AG04449 (cell line): ENCODE measurements at regions of chr2 and their contacts with region 1.

Region 1: DNA sequence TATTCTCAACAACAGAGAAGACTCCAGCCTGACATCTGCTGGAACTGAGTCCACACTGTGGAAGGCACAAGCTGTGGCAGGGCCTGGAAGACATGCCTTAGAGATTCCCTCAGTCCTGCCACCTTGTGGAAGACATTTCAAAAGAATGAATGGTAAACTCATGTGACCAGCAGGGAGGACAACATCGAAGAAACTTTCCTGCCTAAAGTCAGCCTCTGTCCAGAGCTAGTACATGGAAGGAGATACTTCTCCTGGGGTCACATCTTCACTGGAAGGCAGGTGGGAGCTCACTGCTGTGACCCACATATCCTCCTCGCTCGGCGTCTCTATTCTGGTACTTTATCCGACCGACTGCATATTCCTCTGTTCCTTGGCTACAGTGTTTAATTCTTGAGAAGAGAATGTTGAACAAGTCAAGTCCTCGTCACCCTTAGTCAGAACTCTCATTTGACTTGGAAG is 59.5 kb downstream of the PUM2 start:
- DNase-seq: peak; percentile 23
- H3K4me3 ChIP-seq: no peak overlapping the region
- CTCF ChIP-seq: peak; percentile 76

Region 2: GRCh38 chr2:20106746-20107145 is 184.4 kb before region 1 on chr2:
- CTCF ChIA-PET with region 1: interaction called, 20 read pairs
- POLR2A ChIA-PET with region 1: no interaction called
- DNase-seq: no peak
- H3K4me3 ChIP-seq: peak overlapping the region; percentile 25; the same call in 1 of the 2 replicates
- CTCF ChIP-seq: peak; percentile 47

Region 3: GRCh38 chr2:20185176-20186022 is 105.7 kb before region 1 on chr2:
- CTCF ChIA-PET with region 1: no interaction called
- POLR2A ChIA-PET with region 1: no interaction called
- DNase-seq: no peak
- H3K4me3 ChIP-seq: no peak overlapping the region
- CTCF ChIP-seq: no peak

Region 4: GRCh38 chr2:20247084-20247483 is 44.1 kb before region 1 on chr2:
- CTCF ChIA-PET with region 1: interaction called, 13 read pairs
- POLR2A ChIA-PET with region 1: no interaction called
- DNase-seq: no peak
- H3K4me3 ChIP-seq: no peak overlapping the region
- CTCF ChIP-seq: no peak

Region 5: DNA sequence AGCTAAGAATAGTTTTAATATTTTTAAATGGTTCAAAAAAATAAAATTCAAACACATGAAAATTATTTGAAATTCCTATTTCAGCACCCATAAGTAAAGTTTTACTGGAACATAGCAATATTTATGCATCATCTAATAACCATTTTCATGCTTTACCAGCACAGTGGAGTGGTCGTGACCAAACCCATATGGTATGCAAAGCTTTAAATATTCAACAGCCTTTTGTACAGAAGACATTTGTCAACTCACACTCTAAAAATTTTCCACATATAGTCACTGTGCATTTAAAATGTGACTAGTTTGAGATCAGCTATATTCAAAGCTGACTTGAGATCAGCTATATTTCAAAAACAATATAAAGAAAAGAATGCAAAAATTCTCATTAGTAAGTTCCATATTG is 13.3 kb after region 1 on chr2:
- CTCF ChIA-PET with region 1: interaction called, 176 read pairs
- POLR2A ChIA-PET with region 1: no interaction called
- DNase-seq: peak; percentile 42
- H3K4me3 ChIP-seq: no peak overlapping the region
- CTCF ChIP-seq: no peak

Region 6: DNA sequence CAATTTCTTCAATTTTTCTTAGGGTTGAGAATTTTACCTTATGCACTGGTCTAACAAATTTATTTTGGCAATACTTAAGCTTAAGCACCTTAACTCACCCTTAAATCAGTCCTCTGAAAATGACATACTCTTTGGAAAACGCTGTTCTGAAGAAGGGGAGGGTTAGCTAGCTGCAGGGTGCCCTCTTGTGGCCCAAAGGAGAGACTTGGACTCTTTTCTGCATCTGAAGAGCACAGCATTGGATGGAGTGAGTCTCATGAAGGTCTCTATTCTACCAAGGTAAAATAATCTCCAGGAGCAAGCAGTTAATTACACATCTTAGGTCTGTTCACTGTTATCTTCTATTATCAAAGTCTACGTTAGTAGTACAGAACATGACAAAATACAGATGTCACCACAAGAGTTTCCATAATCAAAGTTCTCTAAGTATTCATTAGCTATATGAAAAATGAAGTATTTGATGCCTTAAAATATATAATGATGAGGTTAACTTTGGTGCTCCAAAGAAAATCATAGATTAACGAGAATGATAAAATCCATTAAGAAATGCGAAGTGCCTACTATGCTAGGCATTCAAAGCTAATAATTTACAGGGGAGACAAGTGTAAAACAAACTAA is 35.1 kb after region 1 on chr2:
- CTCF ChIA-PET with region 1: interaction called, 49 read pairs
- POLR2A ChIA-PET with region 1: no interaction called
- DNase-seq: no peak
- H3K4me3 ChIP-seq: no peak overlapping the region
- CTCF ChIP-seq: peak; percentile 88

Region 7: GRCh38 chr2:20584637-20585321 is 293.6 kb after region 1 on chr2:
- CTCF ChIA-PET with region 1: no interaction called
- POLR2A ChIA-PET with region 1: no interaction called
- DNase-seq: peak; percentile 91
- H3K4me3 ChIP-seq: no peak overlapping the region
- CTCF ChIP-seq: no peak